ENCODE measurements at regions of chr16 and their contacts with region 1.

Region 1: GRCh38 chr16:67935402-67936123 is 1.1 kb downstream of the PSMB10 start:
- DNase-seq: peak; percentile 98
- ATAC-seq: peak; percentile 85
- H3K4me3 ChIP-seq: peak overlapping the region; percentile 86 to 97 (median 97)
- H3K27ac ChIP-seq: peak overlapping the region; percentile 70
- H3K4me1 ChIP-seq: peaks cover 30% of the 10 kb centered on the region
- H3K27me3 ChIP-seq: no peaks in the 10 kb centered on the region; a peak in 1 of 5 replicates
- CTCF ChIP-seq: peak; percentile 27
- EP300 ChIP-seq: no peak
- POLR2A ChIP-seq: peak in 1 of 2 experiments; percentile 79; a peak in 2 of 4 replicates
- RAD21 ChIP-seq: peak; percentile 34; the same call in 1 of the 2 replicates

Region 2: DNA sequence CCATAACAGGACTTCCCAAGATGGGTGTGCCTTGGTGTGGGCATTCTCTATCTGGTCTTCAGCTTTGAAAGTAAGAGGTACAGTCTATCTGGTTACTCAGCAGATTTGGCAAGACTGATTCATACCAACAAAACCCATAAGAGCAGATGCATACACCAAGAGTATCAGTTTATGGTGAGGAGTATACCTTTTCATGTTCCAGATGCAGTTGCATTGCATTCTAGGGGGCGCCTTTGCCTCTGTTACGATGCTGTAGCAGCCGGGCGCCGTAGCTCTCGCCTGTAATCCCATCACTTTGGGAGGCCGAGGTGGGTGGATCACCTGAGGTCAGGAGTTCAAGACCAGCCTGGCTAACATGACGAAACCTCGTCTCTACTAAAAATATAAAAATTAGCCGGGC is 321.8 kb before region 1 on chr16:
- CTCF ChIA-PET with region 1: no interaction called
- POLR2A ChIA-PET with region 1: no interaction called
- in situ Hi-C with region 1: no loop called
- intact Hi-C with region 1: no loop called
- DNase-seq: peak; percentile 29
- ATAC-seq: peak; percentile 73
- H3K4me3 ChIP-seq: no peak overlapping the region
- H3K27ac ChIP-seq: no peak overlapping the region
- H3K4me1 ChIP-seq: no peaks in the 10 kb centered on the region
- H3K27me3 ChIP-seq: no peaks in the 10 kb centered on the region
- CTCF ChIP-seq: peak; percentile 46
- EP300 ChIP-seq: no peak
- POLR2A ChIP-seq: no peak
- RAD21 ChIP-seq: no peak

Region 3: GRCh38 chr16:67806428-67807147 is 129.0 kb before region 1 on chr16 and contains the starts of genes RANBP10 and TSNAXIP1:
- CTCF ChIA-PET with region 1: no interaction called
- POLR2A ChIA-PET with region 1: interaction called, 11 read pairs
- in situ Hi-C with region 1: no loop called
- intact Hi-C with region 1: no loop called
- DNase-seq: peak; percentile 100
- ATAC-seq: peak; percentile 95
- H3K4me3 ChIP-seq: peak within 1 kb of the TSS; percentile 92 to 98 (median 98)
- H3K27ac ChIP-seq: peak within 1 kb of the TSS; percentile 72
- H3K4me1 ChIP-seq: peaks cover 42% of the 10 kb centered on the region
- H3K27me3 ChIP-seq: no peaks in the 10 kb centered on the region; a peak in 1 of 5 replicates
- CTCF ChIP-seq: no peak
- EP300 ChIP-seq: peak in 1 of 2 experiments; percentile 33; a peak in 2 of 4 replicates
- POLR2A ChIP-seq: peak; percentile 84 to 94; a peak in 3 of 4 replicates
- RAD21 ChIP-seq: no peak; the same call in 1 of the 2 replicates
- total RNA-seq, gene RANBP10: 8.5 and 9.2 TPM in 2 replicates
- total RNA-seq, gene TSNAXIP1: 0.10 and 0.86 TPM in 2 replicates

Region 4: GRCh38 chr16:67892899-67893742 is 42.4 kb before region 1 on chr16 and contains the start of gene PSKH1:
- CTCF ChIA-PET with region 1: interaction called, 3 read pairs
- POLR2A ChIA-PET with region 1: interaction called, 32 read pairs
- in situ Hi-C with region 1: no loop called
- intact Hi-C with region 1: no loop called
- DNase-seq: peak; percentile 95
- ATAC-seq: peak; percentile 94
- H3K4me3 ChIP-seq: peak within 1 kb of the TSS; percentile 93 to 99 (median 98)
- H3K27ac ChIP-seq: peak within 1 kb of the TSS; percentile 90
- H3K4me1 ChIP-seq: peaks cover 43% of the 10 kb centered on the region
- H3K27me3 ChIP-seq: no peaks in the 10 kb centered on the region; a peak in 1 of 5 replicates
- CTCF ChIP-seq: peak; percentile 12; the same call in 1 of the 2 replicates
- EP300 ChIP-seq: no peak
- POLR2A ChIP-seq: peak; percentile 46 to 66; a peak in 3 of 4 replicates
- RAD21 ChIP-seq: peak; percentile 67
- total RNA-seq, gene PSKH1: 8.4 and 12.9 TPM in 2 replicates

Region 5: DNA sequence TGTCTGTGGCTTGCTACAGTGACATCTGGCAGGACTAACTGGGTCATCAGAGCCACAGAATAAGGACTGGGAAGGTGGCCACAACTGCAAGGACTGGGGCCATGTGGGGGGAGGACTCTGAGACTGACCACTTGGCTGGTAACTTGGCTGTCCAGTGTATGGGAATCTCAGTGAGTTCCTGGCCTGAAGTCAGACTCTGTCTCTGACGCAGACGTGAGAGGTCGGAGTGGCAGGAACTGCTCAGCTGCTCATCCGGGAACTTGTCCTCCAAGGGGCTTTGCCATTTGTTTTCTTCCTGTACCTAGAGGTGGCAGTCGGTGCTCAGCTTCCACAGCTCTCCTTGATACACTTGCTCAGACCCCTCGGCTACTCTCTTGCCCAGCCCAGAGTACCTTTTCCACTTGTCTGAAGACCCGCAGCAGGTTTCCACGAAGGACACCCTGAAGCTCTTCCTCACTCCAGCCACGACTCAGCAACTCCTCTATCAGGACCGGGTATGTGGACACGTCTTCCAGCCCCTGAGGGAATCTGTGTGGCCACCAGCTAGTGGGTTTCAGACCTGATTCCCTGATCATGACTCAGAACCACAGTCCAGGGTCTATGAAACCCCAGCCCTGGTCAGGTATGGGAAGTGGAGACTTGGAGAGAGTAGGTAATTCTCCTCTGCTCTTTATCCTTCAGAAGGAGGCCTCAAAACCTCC is 52.0 kb after region 1 on chr16:
- CTCF ChIA-PET with region 1: no interaction called
- POLR2A ChIA-PET with region 1: interaction called, 14 read pairs
- in situ Hi-C with region 1: no loop called
- intact Hi-C with region 1: no loop called
- DNase-seq: peak; percentile 57
- ATAC-seq: peak; percentile 66
- H3K4me3 ChIP-seq: peak overlapping the region; percentile 24 to 61 (median 30)
- H3K27ac ChIP-seq: no peak overlapping the region
- H3K4me1 ChIP-seq: peaks cover 60% of the 10 kb centered on the region
- H3K27me3 ChIP-seq: peaks cover 2 to 18% of the 10 kb centered on the region in 2 experiments
- CTCF ChIP-seq: peak; percentile 41
- EP300 ChIP-seq: no peak
- POLR2A ChIP-seq: peak; percentile 40 to 48; a peak in 2 of 4 replicates
- RAD21 ChIP-seq: no peak

Region 6: GRCh38 chr16:68040507-68041288 is 105.1 kb after region 1 on chr16:
- CTCF ChIA-PET with region 1: no interaction called
- POLR2A ChIA-PET with region 1: interaction called, 5 read pairs
- in situ Hi-C with region 1: loop called (anchors 5 kb)
- intact Hi-C with region 1: loop called (anchors 1 kb)
- DNase-seq: peak; percentile 82
- ATAC-seq: peak; percentile 99
- H3K4me3 ChIP-seq: no peak overlapping the region
- H3K27ac ChIP-seq: no peak overlapping the region
- H3K4me1 ChIP-seq: peaks cover 5% of the 10 kb centered on the region; the same call in 1 of the 2 replicates
- H3K27me3 ChIP-seq: no peaks in the 10 kb centered on the region
- CTCF ChIP-seq: peak; percentile 95
- EP300 ChIP-seq: no peak
- POLR2A ChIP-seq: no peak
- RAD21 ChIP-seq: peak; percentile 97

Region 7: GRCh38 chr16:68155425-68155824 is 219.9 kb after region 1 on chr16:
- CTCF ChIA-PET with region 1: no interaction called
- POLR2A ChIA-PET with region 1: no interaction called
- in situ Hi-C with region 1: no loop called
- intact Hi-C with region 1: no loop called
- DNase-seq: peak; percentile 12
- ATAC-seq: peak; percentile 45
- H3K4me3 ChIP-seq: no peak overlapping the region
- H3K27ac ChIP-seq: no peak overlapping the region
- H3K4me1 ChIP-seq: no peaks in the 10 kb centered on the region
- H3K27me3 ChIP-seq: no peaks in the 10 kb centered on the region
- CTCF ChIP-seq: no peak
- EP300 ChIP-seq: no peak
- POLR2A ChIP-seq: no peak
- RAD21 ChIP-seq: no peak